AG04449 (cell line): ENCODE measurements at regions of chr14 and their contacts with region 1.

Region 1: DNA sequence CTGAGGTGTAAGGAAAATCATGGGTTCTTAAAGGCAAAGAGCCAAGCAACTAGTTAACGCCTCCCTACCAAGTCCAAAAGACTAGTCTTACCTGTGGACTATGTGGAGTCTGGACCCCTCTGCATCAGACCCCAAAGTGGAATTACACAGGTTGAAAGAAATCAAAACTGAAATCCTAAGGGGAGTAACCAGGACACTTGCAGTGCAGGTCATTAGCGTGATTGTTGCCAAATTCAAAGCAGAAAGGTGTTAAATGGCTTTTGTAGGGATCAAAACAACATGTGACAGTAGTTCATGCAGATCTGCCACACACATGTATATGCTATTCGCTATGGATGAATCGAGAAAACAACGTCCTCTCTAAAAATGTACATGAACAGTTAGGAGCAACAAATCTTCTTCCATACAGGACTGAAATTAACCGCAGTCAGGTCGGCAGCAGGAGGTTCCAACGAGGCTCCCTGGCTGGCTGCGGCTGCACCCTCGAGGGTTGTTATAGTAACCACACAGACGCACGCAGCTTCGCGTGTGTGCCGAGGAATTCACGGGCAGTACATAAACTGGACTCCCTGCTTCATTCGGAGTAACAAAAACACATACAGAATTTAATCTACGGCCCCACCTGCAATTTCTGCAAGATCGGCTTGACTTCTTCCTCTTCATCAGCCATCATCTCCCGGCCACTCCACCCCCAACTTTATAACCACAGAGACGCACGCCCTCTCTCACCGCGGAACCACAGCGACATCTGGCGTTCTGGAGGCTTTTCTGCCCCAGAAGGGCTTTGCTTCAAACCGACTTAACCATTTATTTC is at the start of gene TTC5:
- DNase-seq: peak; percentile 37
- H3K4me3 ChIP-seq: peak within 1 kb of the TSS; percentile 58
- CTCF ChIP-seq: peak; percentile 90

Region 2: DNA sequence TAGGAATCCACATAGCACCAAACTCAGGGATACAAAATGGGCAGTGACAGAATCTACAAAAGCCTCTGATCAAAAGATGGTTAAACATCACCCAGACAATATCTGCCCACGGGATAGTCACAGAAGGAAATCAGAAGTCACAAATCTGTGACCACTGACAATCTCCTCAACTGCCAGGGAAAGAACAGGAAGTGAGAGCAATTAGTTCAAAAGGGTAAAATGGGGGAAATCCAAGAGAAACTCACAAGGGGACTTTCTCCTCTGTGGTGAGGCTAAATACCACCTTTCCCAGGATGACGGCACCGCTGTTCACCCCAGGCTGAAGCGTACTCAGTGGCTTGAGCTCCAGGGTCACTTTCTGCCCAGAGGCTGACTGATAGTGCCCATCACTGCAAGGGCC is 10.4 kb before region 1 on chr14:
- CTCF ChIA-PET with region 1: interaction called, 10 read pairs
- POLR2A ChIA-PET with region 1: no interaction called
- DNase-seq: no peak
- H3K4me3 ChIP-seq: no peak overlapping the region
- CTCF ChIP-seq: no peak

Region 3: GRCh38 chr14:20317720-20318119 is 12.2 kb after region 1 on chr14:
- CTCF ChIA-PET with region 1: interaction called, 25 read pairs
- POLR2A ChIA-PET with region 1: no interaction called
- DNase-seq: no peak
- H3K4me3 ChIP-seq: no peak overlapping the region
- CTCF ChIP-seq: no peak

Region 4: GRCh38 chr14:20332788-20333493 is 27.5 kb after region 1 on chr14 and contains the start of gene CCNB1IP1:
- CTCF ChIA-PET with region 1: interaction called, 59 read pairs
- POLR2A ChIA-PET with region 1: no interaction called
- DNase-seq: peak; percentile 67
- H3K4me3 ChIP-seq: peak within 1 kb of the TSS; percentile 76
- CTCF ChIP-seq: no peak

Region 5: DNA sequence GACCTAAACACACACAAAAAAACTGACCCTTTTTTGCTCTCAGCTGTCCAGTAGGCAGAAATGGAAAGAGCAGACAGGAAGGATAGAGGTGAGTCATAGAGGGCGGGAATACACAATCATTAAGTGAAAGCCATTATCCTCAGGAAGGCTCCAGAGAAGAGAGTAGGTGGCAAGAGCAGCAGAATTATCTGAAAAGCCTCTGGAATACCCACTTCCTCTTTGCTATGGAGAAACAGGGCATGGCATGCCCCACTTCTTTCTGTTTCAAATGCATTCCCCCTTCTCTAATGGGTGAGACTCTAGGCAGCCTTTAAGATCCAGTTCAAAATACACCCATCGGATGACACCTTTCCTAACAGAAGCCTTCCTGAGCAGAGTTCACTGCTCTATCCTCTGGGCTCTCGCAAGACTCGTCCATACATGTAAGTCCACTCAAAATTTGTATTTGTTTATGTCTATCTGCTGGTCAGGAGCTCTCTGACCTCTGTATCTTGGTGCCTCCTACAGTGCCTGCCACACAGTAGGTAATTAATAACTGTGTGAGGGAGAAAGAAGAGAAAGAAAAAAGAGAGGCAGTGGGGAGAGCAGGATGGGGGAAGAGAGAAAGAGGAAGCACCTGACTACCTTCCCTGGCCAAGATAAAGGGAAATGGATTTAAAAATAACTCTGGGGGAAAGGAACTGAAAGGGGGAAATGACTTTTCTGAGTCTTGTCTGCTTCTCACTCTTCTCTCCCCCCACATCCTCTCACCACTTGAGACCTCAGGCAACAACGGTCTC is 121.9 kb after region 1 on chr14:
- CTCF ChIA-PET with region 1: no interaction called
- POLR2A ChIA-PET with region 1: no interaction called
- DNase-seq: no peak
- H3K4me3 ChIP-seq: no peak overlapping the region
- CTCF ChIP-seq: no peak

Region 6: DNA sequence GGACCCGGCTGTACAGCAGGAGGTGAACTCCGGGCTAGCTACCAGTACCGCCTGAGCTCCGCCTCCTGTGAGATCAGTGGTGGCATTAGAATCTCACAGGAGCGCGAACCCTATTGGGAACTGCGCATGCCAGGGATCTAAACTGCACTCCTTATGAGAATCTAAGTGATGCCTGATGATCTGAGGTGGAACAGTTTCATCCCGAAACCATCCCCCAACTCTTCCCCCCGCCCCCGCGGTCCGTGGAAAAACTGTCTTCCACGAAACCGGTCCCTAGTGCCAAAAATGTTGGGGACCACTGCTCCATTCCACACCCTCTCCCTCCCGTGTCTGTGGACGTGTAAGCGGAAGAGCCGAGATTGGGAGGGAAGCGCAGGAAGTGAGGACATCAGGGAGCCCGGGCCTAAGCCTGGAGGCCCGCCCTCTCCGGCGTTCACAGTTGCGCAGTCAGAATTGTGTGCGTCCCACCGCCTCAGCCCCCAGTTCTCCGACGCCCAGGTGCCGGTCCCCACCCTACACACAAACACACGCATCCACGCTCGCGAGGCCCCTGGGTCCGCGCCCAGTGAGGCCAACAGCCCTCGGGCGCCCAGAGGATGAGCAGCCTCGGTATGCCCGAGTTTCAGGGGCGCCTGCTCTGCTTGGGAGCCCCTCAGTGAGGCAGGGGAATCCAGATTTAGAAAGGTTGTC is 377.1 kb after region 1 on chr14:
- CTCF ChIA-PET with region 1: no interaction called
- POLR2A ChIA-PET with region 1: no interaction called
- DNase-seq: no peak
- H3K4me3 ChIP-seq: peak overlapping the region; percentile 96
- CTCF ChIP-seq: no peak